Left cardiac atrium (tissue), 4 donors: ENCODE measurements at regions of chr6 and their contacts with region 1.

Region 1: DNA sequence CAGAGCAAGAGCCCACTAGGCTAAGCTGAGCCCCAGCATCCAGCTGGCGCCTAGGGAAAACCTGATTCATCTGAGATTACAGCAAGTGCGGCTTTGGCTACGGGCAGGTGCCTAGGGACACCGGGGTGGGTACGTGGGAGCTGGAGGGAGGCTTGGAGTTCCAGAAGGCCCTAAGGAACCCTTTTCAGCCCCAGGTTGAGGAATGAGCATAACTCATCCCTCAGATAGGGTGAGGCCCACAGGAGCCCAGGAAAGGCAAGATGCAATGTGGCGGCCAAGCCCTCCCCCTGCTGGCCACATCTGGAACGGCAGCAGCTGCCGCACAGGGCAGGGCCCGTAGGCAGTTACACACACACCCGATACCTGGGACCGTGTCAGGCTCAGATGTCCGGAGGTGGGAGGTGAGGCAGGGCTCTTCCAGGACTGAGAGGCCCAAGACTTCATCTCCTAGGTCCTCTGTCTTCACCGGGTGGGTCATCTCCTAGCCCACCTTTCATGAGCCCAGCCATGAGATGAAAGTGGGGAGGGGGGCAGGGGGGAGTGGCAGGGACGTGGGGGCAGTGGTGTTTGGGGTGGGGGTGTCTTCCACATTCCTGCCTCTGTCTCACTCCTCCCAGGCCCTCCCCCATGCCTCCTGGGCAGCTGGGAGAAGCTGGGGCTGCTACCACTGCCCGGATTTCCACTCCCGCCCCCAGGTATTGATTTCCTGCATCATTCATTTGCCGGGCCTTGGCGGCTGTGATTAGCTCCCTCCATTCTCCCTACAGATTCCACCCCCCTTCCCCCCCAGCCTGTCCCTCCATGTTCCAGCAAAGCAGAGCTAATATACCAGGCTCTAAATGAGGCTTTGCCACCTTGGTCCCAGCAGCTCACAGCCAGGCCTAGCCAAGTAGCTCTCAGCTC is 5.5 kb downstream of the MDGA1 start:
- DNase-seq: peak; percentile 72
- ATAC-seq: peak; percentile 81 to 83

Region 2: GRCh38 chr6:37324131-37325033 is 367.8 kb before region 1 on chr6:
- intact Hi-C with region 1: loop called in 1 of 2 experiments (anchors 10 kb)
- DNase-seq: no peak
- ATAC-seq: no peak

Region 3: DNA sequence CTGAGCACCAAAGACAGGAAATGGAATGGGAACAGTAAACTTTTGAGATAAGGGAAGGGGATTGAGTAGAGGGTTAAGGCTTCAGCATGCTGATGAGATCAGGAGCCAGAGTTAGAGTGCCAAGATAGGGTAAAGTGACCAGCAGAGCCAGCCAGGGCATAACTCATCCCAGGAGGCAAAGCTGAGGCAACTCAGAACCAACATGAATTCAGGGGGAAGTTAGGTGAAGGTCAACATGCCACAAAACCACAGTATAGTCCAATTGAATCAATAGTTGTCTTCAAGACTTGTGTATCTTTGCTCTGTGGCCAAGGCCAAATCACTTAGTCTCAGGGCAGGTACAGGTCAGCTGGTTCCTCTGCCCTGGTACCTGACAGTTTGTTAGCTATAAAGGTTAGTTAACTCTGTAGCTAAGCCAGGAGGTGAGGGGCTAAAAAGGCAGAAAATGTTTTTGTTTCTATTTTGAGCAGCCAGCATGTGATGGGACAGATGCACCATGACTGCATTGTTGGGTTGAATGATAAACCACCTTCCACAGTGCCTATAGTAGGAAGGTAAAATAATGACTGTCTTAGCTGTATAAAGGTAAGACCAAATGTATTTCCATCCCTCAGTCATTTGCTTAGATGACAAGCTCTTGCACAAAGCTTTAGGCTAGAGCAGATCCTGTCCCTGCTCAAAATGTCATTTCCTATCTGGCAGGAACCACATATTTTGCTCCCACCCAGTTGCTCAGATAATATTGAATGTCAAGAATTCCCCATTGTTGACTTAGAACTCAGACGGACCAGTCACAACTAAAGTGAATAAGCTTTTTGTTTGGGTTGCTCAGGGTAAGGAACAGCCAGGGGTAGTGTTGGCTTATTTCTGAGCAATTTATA is 322.6 kb before region 1 on chr6:
- intact Hi-C with region 1: loop called in 1 of 2 experiments (anchors 5 kb)
- DNase-seq: no peak
- ATAC-seq: peak in 1 of 2 donors; percentile 43

Region 4: DNA sequence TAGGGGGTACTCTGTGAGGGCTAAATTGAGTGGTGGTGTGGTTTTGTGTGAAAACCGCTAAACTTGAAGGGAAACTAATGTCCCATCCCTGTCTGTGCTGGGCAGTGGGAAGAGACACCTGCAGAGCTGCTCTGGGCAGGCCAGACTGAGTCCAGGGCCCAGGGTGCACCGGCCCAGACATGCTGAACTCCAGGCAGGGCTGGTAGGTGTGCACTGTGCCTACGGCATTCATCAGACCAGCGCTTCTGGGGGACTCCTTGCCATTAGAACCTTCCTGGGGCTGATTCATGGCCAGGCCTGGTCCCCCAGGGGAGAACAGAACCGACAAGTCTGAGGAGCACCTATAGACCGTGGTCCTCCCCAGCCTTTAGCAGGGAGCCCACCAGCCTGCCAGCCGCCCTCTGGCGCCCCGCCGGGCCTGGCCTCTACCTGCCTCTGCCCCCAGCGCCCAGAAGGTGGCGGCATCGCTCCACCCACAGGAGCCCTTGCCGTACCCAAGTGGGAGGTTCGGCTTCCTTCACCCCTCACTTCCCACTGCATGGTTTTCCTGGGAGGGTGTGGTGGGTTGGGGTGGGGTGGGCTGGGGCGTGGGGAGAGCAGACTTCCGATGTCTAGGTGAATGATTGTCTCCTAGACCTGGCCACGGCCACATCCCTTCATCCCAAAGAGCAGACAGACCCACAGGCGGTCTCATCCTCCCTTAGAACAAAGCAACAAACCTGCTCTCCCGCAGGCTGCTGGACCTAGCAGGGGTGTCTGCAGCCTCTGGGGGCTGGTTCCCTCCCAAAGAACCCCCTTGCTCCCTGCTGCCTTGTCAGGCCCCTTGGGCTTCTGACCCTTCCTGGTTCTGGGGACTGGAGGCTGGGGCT is 208.0 kb before region 1 on chr6:
- intact Hi-C with region 1: loop called (anchors 2 to 10 kb)
- DNase-seq: peak; percentile 61
- ATAC-seq: peak; percentile 64 to 72

Region 5: DNA sequence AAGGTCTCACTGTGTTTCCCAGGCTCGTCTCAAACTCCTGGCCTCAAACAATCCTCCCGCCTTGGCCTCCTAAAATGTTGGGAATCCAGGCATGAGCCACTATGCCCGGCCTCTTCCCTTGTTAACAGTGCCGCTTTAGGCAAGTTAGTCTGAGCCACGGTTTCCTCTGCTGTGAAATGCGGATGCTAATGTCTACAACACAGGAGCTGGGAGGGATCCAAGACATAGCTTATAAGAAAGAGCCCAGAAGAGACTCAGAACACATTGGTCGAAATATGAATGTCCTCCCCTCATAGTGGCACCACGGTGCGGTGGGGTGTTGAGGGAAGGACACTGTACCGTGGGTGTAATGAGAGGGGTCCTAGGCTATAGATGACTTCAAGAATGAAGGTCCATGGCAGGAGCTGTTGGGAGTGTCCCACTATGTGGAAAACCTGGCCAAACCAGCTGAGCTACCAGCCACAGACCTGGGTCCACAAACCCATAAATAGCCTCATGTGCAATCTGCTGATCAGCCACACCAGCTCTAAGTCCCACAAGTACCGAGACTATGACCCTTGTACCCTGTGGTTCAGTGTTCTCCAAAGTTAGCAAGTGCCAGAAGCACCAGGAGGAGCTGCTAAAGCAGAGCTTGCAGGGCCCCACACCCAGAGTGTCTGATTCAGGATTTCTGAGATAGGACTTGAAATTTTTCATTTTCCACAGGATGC is 69.6 kb after region 1 on chr6:
- intact Hi-C with region 1: no loop called
- DNase-seq: no peak
- ATAC-seq: no peak

Region 6: GRCh38 chr6:37868447-37868825 is 176.3 kb after region 1 on chr6:
- intact Hi-C with region 1: no loop called
- DNase-seq: no peak
- ATAC-seq: peak in 1 of 2 donors; percentile 87